CD8-positive, alpha-beta T cell (primary cell): ENCODE measurements at regions of chr19 and their contacts with region 1.

Region 1: DNA sequence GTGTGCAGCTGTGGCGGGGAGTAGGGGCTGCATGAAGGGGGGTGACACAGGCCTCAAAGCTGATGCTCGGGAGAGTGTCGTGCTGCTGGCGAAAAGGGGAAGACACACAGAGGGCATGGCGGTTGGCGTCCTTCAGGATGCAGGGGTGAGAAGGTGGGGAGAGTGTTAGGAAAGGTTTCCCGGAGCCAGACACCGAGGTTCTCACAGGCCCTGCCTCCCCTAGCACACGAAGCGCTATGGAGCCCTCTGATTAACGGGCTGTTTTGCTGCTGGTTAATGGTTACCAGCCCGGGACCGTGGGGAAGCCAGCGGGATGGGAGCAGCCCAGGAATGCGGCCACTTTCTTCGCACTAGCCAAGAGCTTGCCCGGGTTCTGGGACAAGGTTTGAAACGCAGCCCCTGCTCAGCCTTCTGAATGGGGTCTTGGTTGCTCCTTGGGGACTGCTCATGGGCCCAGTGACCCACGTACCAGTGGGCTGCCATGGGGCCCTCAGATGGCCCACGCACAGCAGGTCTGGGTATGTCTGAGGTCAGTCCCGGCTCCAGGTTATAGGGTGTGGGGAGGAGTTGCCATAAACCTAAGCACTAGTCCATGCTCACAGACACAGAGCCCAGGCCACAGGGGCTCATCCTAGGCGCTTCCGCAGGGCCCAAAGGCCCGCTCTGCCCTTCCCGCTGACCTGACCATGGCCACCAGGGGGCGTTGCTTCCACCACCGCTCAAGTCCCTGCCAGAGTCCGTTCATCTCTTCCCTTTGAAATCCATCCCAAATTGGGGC is 31.3 kb upstream of the ISYNA1 start:
- DNase-seq: peak; percentile 24 to 77 (median 62)
- ATAC-seq: peak; percentile 55
- H3K4me3 ChIP-seq: no peak overlapping the region
- H3K4me3 Mint-ChIP-seq: no peak overlapping the region
- H3K27ac ChIP-seq: no peak overlapping the region
- H3K27ac Mint-ChIP-seq: no peak overlapping the region
- H3K4me1 ChIP-seq: peaks cover 13% of the 10 kb centered on the region
- H3K4me1 Mint-ChIP-seq: peaks cover 21% of the 10 kb centered on the region
- H3K27me3 ChIP-seq: no peaks in the 10 kb centered on the region
- H3K27me3 Mint-ChIP-seq: no peaks in the 10 kb centered on the region
- CTCF ChIP-seq: peak; percentile 56

Region 2: GRCh38 chr19:18675779-18676178 is 206.5 kb after region 1 on chr19:
- CTCF ChIA-PET with region 1: no interaction called
- POLR2A ChIA-PET with region 1: no interaction called
- intact Hi-C with region 1: loop called (anchors 2 to 5 kb)
- DNase-seq: peak in 4 of 9 experiments; percentile 22 to 50 (median 29)
- ATAC-seq: no peak
- H3K4me3 ChIP-seq: no peak overlapping the region
- H3K4me3 Mint-ChIP-seq: no peak overlapping the region
- H3K27ac ChIP-seq: no peak overlapping the region
- H3K27ac Mint-ChIP-seq: no peak overlapping the region
- H3K4me1 ChIP-seq: no peaks in the 10 kb centered on the region
- H3K4me1 Mint-ChIP-seq: no peaks in the 10 kb centered on the region
- H3K27me3 ChIP-seq: no peaks in the 10 kb centered on the region
- H3K27me3 Mint-ChIP-seq: no peaks in the 10 kb centered on the region
- CTCF ChIP-seq: no peak

Region 3: GRCh38 chr19:18846862-18847548 is 377.7 kb after region 1 on chr19:
- CTCF ChIA-PET with region 1: interaction called, 11 read pairs
- POLR2A ChIA-PET with region 1: no interaction called
- intact Hi-C with region 1: loop called (anchors 1 to 5 kb)
- DNase-seq: peak; percentile 37 to 81 (median 73)
- ATAC-seq: peak; percentile 65
- H3K4me3 ChIP-seq: no peak overlapping the region
- H3K4me3 Mint-ChIP-seq: peak overlapping the region; percentile 36
- H3K27ac ChIP-seq: no peak overlapping the region
- H3K27ac Mint-ChIP-seq: no peak overlapping the region
- H3K4me1 ChIP-seq: peaks cover 40% of the 10 kb centered on the region
- H3K4me1 Mint-ChIP-seq: peaks cover 56% of the 10 kb centered on the region
- H3K27me3 ChIP-seq: no peaks in the 10 kb centered on the region
- H3K27me3 Mint-ChIP-seq: no peaks in the 10 kb centered on the region
- CTCF ChIP-seq: peak; percentile 78